Naive thymus-derived CD4-positive, alpha-beta T cell (primary cell): ENCODE measurements at regions of chr19 and their contacts with region 1.

Region 1: DNA sequence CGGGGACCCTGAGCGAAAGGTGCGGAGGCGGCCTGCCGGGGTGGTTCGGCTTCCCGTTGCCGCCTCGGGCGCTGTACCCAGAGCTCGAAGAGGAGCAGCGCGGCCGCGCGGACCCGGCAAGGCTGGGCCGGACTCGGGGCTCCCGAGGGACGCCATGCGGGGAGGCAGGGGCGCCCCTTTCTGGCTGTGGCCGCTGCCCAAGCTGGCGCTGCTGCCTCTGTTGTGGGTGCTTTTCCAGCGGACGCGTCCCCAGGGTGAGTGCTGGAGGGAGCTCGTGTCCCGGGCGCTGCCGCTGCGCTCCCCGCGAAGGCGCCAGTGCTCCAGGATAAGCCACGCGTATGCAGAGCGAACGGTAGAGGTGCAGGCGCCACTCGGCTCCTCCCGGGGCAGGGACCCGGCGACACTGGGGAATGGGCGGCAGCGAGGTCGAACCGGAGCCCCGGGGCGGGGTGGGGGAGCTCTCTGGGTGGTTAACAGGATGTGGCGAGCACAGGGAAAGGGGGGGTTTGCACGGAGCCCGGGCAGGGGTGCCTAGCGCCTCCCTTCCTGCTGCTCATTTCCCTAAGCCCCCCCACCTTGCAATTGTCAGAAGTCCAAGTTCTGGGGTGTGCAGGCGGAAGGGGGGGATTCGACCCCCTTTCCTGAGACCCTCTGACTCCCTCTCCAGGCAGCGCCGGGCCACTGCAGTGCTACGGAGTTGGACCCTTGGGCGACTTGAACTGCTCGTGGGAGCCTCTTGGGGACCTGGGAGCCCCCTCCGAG is at the start of gene IL27RA:
- DNase-seq: peak; percentile 71 to 89 (median 87)
- ATAC-seq: peak; percentile 85
- H3K4me3 ChIP-seq: peak within 1 kb of the TSS; percentile 98
- H3K4me3 Mint-ChIP-seq: peak within 1 kb of the TSS; percentile 88 to 97 (median 94)
- H3K27ac ChIP-seq: peak within 1 kb of the TSS; percentile 99
- H3K27ac Mint-ChIP-seq: peak within 1 kb of the TSS; percentile 92 to 97 (median 95)
- H3K4me1 ChIP-seq: peaks cover 16% of the 10 kb centered on the region in 2 donors
- H3K4me1 Mint-ChIP-seq: peaks cover 21 to 52% (median 36%) of the 10 kb centered on the region in 7 donors
- H3K27me3 ChIP-seq: no peaks in the 10 kb centered on the region
- H3K27me3 Mint-ChIP-seq: peaks cover 0 to 1% (median 0%) of the 10 kb centered on the region in 5 donors
- total RNA-seq, gene IL27RA: 32.1 to 118 (median 83.2) TPM

Region 2: GRCh38 chr19:13784731-13785452 is 247.0 kb before region 1 on chr19:
- CTCF ChIA-PET with region 1: interaction called, 4 read pairs
- POLR2A ChIA-PET with region 1: interaction called, 10 read pairs
- intact Hi-C with region 1: no loop called
- DNase-seq: peak; percentile 51 to 73 (median 63)
- ATAC-seq: peak; percentile 87
- H3K4me3 ChIP-seq: no peak overlapping the region
- H3K4me3 Mint-ChIP-seq: peak overlapping the region; percentile 51 to 72 (median 68)
- H3K27ac ChIP-seq: no peak overlapping the region
- H3K27ac Mint-ChIP-seq: peak overlapping the region; percentile 58 to 90 (median 80)
- H3K4me1 ChIP-seq: peaks cover 28 to 32% of the 10 kb centered on the region in 2 donors
- H3K4me1 Mint-ChIP-seq: peaks cover 7 to 46% (median 32%) of the 10 kb centered on the region in 7 donors
- H3K27me3 ChIP-seq: no peaks in the 10 kb centered on the region
- H3K27me3 Mint-ChIP-seq: no peaks in the 10 kb centered on the region

Region 3: DNA sequence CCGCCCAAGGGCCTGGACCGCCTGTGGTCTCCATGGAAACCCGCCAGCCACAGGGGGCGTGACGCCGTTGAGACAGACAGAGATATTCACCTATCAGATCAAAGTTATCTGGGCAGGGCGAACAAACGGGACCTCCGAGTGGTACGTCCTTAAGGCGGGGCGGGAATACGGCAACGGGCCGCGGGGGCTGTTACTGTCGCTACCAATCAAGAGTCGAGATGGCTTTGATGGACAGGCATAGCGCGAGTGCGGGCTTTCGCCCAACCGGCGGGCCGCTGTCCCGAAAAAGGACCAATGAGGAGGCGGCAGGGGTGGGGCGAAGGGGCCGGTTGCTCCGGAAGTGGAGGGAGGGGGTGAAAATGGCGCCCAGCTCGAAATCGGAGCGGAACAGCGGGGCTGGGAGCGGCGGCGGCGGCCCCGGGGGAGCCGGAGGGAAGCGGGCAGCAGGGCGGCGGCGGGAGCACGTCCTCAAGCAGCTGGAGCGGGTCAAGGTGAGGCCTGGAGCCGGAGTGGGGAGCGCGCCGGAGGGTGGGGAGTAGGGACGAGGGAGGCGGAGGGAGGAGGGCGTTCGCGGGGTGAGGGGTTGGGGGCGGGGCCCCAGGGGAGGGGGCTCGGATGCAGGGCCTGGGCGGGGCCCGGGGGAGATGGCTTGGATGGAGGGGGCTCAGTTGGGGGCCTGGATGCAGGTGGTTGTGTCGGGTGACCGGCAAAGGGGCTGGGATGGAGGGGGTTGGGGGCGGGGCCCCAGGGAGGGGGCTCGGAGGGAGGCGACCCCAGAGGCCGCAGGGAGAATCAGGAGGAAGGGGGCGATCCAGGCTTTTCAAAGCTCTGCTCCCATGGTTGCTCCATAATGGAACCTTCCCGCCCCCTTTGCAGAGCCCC is 79.5 kb before region 1 on chr19 and contains the start of gene DCAF15:
- CTCF ChIA-PET with region 1: interaction called, 4 read pairs
- POLR2A ChIA-PET with region 1: interaction called, 59 read pairs
- intact Hi-C with region 1: loop called (anchors 1 kb)
- DNase-seq: peak; percentile 89 to 99 (median 99)
- ATAC-seq: peak; percentile 98
- H3K4me3 ChIP-seq: peak within 1 kb of the TSS; percentile 75
- H3K4me3 Mint-ChIP-seq: peak within 1 kb of the TSS; percentile 74 to 99 (median 93)
- H3K27ac ChIP-seq: peak within 1 kb of the TSS; percentile 90
- H3K27ac Mint-ChIP-seq: peak within 1 kb of the TSS; percentile 86 to 99 (median 91)
- H3K4me1 ChIP-seq: peaks cover 13 to 17% of the 10 kb centered on the region in 2 donors
- H3K4me1 Mint-ChIP-seq: peaks cover 5 to 24% (median 19%) of the 10 kb centered on the region in 7 donors
- H3K27me3 ChIP-seq: no peaks in the 10 kb centered on the region
- H3K27me3 Mint-ChIP-seq: no peaks in the 10 kb centered on the region
- total RNA-seq, gene DCAF15: 68.5 to 92.0 (median 87.2) TPM

Region 4: GRCh38 chr19:13978347-13978733 is 53.6 kb before region 1 on chr19:
- CTCF ChIA-PET with region 1: no interaction called
- POLR2A ChIA-PET with region 1: interaction called, 18 read pairs
- intact Hi-C with region 1: no loop called
- DNase-seq: no peak
- ATAC-seq: peak; percentile 40
- H3K4me3 ChIP-seq: no peak overlapping the region
- H3K4me3 Mint-ChIP-seq: peak overlapping the region in 6 of 10 donors; percentile 13 to 70 (median 28)
- H3K27ac ChIP-seq: peak overlapping the region; percentile 62
- H3K27ac Mint-ChIP-seq: peak overlapping the region in 4 of 9 donors; percentile 34 to 62 (median 44)
- H3K4me1 ChIP-seq: peaks cover 0 to 30% of the 10 kb centered on the region in 2 donors
- H3K4me1 Mint-ChIP-seq: peaks cover 14 to 51% (median 26%) of the 10 kb centered on the region in 7 donors
- H3K27me3 ChIP-seq: no peaks in the 10 kb centered on the region
- H3K27me3 Mint-ChIP-seq: no peaks in the 10 kb centered on the region

Region 5: GRCh38 chr19:13997651-13998002 is 34.3 kb before region 1 on chr19:
- CTCF ChIA-PET with region 1: no interaction called
- POLR2A ChIA-PET with region 1: interaction called, 162 read pairs
- intact Hi-C with region 1: no loop called
- DNase-seq: no peak
- ATAC-seq: no peak
- H3K4me3 ChIP-seq: no peak overlapping the region
- H3K4me3 Mint-ChIP-seq: no peak overlapping the region
- H3K27ac ChIP-seq: no peak overlapping the region
- H3K27ac Mint-ChIP-seq: peak overlapping the region in 4 of 9 donors; percentile 64 to 98 (median 84)
- H3K4me1 ChIP-seq: peaks cover 24 to 31% of the 10 kb centered on the region in 2 donors
- H3K4me1 Mint-ChIP-seq: peaks cover 15 to 46% (median 36%) of the 10 kb centered on the region in 7 donors
- H3K27me3 ChIP-seq: no peaks in the 10 kb centered on the region
- H3K27me3 Mint-ChIP-seq: no peaks in the 10 kb centered on the region

Region 6: GRCh38 chr19:14048443-14049153 is 16.7 kb after region 1 on chr19:
- CTCF ChIA-PET with region 1: interaction called, 4 read pairs
- POLR2A ChIA-PET with region 1: interaction called, 5 read pairs
- intact Hi-C with region 1: loop called in 1 of 2 experiments (anchors 2 kb)
- DNase-seq: peak; percentile 46 to 80 (median 67)
- ATAC-seq: peak; percentile 96
- H3K4me3 ChIP-seq: no peak overlapping the region
- H3K4me3 Mint-ChIP-seq: no peak overlapping the region
- H3K27ac ChIP-seq: peak overlapping the region; percentile 42
- H3K27ac Mint-ChIP-seq: peak overlapping the region in 8 of 9 donors; percentile 21 to 77 (median 61)
- H3K4me1 ChIP-seq: peaks cover 0 to 4% of the 10 kb centered on the region in 2 donors
- H3K4me1 Mint-ChIP-seq: peaks cover 0 to 5% (median 0%) of the 10 kb centered on the region in 7 donors
- H3K27me3 ChIP-seq: no peaks in the 10 kb centered on the region
- H3K27me3 Mint-ChIP-seq: no peaks in the 10 kb centered on the region